Activated CD4-positive, alpha-beta memory T cell treated with anti-CD3 and anti-CD28 coated beads for 36 hours (primary cell): ENCODE measurements at regions of chr1 and their contacts with region 1.

Region 1: GRCh38 chr1:180154325-180155181 is at the start of gene QSOX1:
- DNase-seq: peak; percentile 93
- H3K4me3 Mint-ChIP-seq: peak within 1 kb of the TSS; percentile 89
- H3K27ac Mint-ChIP-seq: peak within 1 kb of the TSS; percentile 73
- H3K4me1 Mint-ChIP-seq: peaks cover 26% of the 10 kb centered on the region
- H3K27me3 Mint-ChIP-seq: no peaks in the 10 kb centered on the region
- total RNA-seq, gene QSOX1: 40.3 to 42.4 TPM

Region 2: DNA sequence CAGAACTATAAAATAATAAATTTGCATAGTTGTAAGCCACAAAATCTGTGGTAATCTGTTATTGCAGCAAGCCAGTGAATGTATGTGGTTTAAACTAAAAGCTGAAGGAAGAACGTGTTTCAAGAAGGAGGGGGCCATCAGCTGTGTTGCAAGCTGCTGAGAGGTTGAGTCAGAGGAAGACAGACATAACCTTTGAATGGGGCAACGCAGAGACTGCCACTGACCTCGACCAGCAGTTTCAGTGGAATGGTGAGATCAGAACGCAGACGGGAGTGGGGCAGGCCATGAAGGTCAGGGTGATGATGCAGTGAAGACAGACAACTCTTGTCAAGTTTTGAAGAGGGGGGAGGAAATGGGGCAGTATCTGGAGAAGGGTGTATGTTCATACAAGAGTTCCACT is 23.0 kb before region 1 on chr1:
- CTCF ChIA-PET with region 1: no interaction called
- POLR2A ChIA-PET with region 1: no interaction called
- intact Hi-C with region 1: loop called (anchors 2 kb)
- DNase-seq: peak; percentile 55
- H3K4me3 Mint-ChIP-seq: no peak overlapping the region
- H3K27ac Mint-ChIP-seq: no peak overlapping the region
- H3K4me1 Mint-ChIP-seq: peaks cover 5% of the 10 kb centered on the region
- H3K27me3 Mint-ChIP-seq: peaks cover 8% of the 10 kb centered on the region

Region 3: GRCh38 chr1:180168786-180169639 is 14.5 kb after region 1 on chr1:
- CTCF ChIA-PET with region 1: interaction called, 10 read pairs
- POLR2A ChIA-PET with region 1: interaction called, 3 read pairs
- intact Hi-C with region 1: no loop called
- DNase-seq: peak; percentile 58
- H3K4me3 Mint-ChIP-seq: no peak overlapping the region
- H3K27ac Mint-ChIP-seq: no peak overlapping the region
- H3K4me1 Mint-ChIP-seq: no peaks in the 10 kb centered on the region
- H3K27me3 Mint-ChIP-seq: no peaks in the 10 kb centered on the region